B cell (primary cell): ENCODE measurements at regions of chr2 and their contacts with region 1.

Region 1: DNA sequence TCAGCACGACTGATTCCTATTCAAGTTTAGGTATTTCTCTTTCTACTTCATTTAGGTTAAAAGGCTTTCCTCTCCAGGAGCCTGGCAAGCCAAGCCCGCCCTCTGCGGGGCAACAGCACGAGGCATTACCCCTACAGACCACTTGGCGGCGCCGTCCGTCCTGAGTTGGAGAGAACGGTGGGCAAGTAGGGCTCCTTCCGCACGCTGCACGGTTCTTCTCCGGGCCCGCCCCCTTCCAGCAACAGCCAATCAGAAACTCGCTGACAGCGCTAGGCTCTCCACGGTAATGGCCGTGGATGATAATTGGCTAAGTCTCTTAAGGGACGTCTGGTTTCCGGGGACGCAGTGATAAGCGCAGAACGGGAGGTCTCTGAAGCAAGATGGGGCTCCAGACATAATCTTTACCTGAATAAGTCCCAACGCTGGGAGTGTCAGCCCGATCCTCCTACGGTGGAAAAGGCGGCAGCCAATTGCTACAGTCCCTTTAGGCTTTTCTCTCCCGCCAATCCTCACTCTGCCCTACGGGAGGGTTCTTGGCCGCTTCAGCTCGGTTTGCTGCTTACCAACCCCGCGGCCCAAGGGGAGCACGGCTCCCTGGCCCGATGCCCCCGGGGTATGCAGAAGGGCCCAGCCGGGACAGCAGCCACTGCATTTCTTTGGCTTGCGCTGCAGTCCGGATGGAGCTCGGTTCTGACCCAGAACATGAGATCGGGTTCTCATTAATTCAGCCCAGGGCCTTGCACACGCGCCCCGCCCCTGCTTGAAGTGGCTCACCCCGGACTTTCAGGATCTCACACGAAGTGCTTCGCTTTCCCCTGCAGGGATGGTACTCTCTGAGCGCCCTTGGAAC is 206.9 kb upstream of the PKDCC start:
- DNase-seq: peak; percentile 97
- ATAC-seq: peak; percentile 99
- H3K4me3 ChIP-seq: peak overlapping the region; percentile 64 to 90 (median 85)
- H3K4me3 Mint-ChIP-seq: peak overlapping the region; percentile 97
- H3K27ac ChIP-seq: peak overlapping the region; percentile 63 to 72
- H3K27ac Mint-ChIP-seq: peak overlapping the region; percentile 88
- H3K4me1 ChIP-seq: peaks cover 10 to 15% of the 10 kb centered on the region in 2 donors
- H3K4me1 Mint-ChIP-seq: peaks cover 11% of the 10 kb centered on the region
- H3K27me3 ChIP-seq: peaks cover 0 to 20% (median 13%) of the 10 kb centered on the region in 4 experiments
- H3K27me3 Mint-ChIP-seq: peaks cover 42% of the 10 kb centered on the region
- CTCF ChIP-seq: peak; percentile 94

Region 2: GRCh38 chr2:41853427-41854216 is 12.7 kb after region 1 on chr2:
- CTCF ChIA-PET with region 1: interaction called, 15 read pairs
- POLR2A ChIA-PET with region 1: no interaction called
- intact Hi-C with region 1: no loop called
- DNase-seq: peak; percentile 35
- ATAC-seq: no peak
- H3K4me3 ChIP-seq: no peak overlapping the region
- H3K4me3 Mint-ChIP-seq: no peak overlapping the region
- H3K27ac ChIP-seq: no peak overlapping the region
- H3K27ac Mint-ChIP-seq: no peak overlapping the region
- H3K4me1 ChIP-seq: peaks cover 4 to 6% of the 10 kb centered on the region in 2 donors
- H3K4me1 Mint-ChIP-seq: peaks cover 2% of the 10 kb centered on the region
- H3K27me3 ChIP-seq: peaks cover 0 to 33% (median 5%) of the 10 kb centered on the region in 4 experiments
- H3K27me3 Mint-ChIP-seq: peaks cover 29% of the 10 kb centered on the region
- CTCF ChIP-seq: peak; percentile 44

Region 3: DNA sequence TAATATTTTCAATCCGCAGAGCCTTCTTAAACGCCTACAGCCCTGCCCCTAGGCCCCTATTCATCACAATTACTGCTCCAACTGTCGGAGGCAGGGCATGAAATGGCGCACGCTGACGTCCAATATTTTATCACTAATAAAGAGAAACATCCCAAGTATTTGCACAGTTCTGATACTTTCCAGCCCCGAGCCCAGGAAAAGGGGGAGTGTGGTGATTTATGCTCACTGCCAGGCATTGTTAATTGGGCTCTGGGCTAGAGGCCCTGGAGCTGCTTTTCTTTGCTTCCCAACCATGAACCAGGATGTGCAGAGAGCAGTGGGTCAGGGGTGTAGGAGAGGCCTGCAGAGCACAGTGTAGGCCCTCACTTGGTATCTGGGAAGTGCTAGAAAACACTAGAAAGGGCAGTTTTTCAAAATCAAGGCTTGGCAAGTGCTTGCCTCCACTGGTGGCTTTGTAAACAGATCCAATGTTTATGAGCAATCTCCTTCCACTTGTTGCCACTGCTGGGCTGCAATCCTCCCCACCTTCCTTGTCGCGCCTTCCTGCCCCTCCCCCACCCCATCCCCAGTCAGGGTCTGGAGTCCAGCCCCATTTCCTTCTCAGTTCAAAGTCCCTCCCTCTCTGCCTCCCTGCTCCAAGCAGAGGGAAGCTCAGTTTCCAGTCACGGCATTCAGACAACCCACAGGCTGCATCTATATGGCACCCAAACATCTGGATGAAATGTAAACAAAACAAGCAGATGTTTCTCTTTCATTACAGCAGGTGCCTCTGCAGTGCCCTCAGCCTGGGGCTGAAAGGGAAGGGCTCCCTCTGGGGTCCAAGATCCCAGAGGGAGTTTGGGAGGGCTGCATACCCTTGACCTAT is 123.0 kb after region 1 on chr2:
- CTCF ChIA-PET with region 1: no interaction called
- POLR2A ChIA-PET with region 1: no interaction called
- intact Hi-C with region 1: no loop called
- DNase-seq: no peak
- ATAC-seq: no peak
- H3K4me3 ChIP-seq: no peak overlapping the region
- H3K4me3 Mint-ChIP-seq: no peak overlapping the region
- H3K27ac ChIP-seq: no peak overlapping the region
- H3K27ac Mint-ChIP-seq: no peak overlapping the region
- H3K4me1 ChIP-seq: no peaks in the 10 kb centered on the region
- H3K4me1 Mint-ChIP-seq: no peaks in the 10 kb centered on the region
- H3K27me3 ChIP-seq: peaks cover 0 to 3% (median 0%) of the 10 kb centered on the region in 4 experiments
- H3K27me3 Mint-ChIP-seq: peaks cover 20% of the 10 kb centered on the region
- CTCF ChIP-seq: no peak